Activated CD4-positive, alpha-beta T cell treated with anti-CD3 and anti-CD28 coated beads for 36 hours (primary cell): ENCODE measurements at regions of chr1 and their contacts with region 1.

Region 1: GRCh38 chr1:67162957-67163356 is 3.3 kb upstream of the IL23R start:
- DNase-seq: peak; percentile 71
- ATAC-seq: peak; percentile 73
- H3K4me3 Mint-ChIP-seq: peak overlapping the region; percentile 59
- H3K27ac Mint-ChIP-seq: peak overlapping the region; percentile 90
- H3K4me1 Mint-ChIP-seq: peaks cover 66% of the 10 kb centered on the region
- H3K27me3 Mint-ChIP-seq: peaks cover 1% of the 10 kb centered on the region

Region 2: DNA sequence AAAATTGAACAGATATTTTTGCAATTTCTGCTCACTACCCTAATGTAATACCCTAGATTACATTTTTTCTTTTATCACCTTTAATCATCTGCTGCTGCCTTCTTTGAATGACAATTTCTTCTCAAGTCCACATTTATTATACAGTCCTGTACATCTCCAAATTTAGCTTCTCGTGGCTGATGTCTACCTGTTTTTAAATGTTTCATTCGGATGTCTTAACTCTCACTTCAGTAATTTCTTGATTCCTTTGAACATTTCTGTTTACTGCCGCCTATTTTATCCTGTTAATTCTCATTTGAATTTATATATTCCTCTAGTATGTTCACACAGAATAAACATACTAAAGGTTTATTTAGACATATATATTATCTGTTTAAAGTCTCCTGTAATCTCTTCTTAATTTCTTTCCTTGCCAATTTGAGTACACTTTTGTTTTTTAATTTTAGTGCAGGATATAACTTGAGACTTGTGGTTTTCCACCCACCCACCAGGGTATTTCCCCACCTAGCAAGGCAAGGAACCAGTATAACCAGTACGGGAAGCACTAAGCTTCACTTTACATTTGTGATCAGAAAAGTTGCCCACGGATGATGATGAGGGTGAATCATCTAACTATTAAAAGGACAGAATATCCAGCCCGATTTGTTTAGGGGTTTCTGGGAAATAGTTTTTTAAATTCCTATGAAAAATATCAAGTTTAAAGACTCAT is 374.6 kb before region 1 on chr1:
- CTCF ChIA-PET with region 1: no interaction called
- POLR2A ChIA-PET with region 1: no interaction called
- intact Hi-C with region 1: loop called in 1 of 2 experiments (anchors 5 kb)
- DNase-seq: peak; percentile 81
- ATAC-seq: peak; percentile 99
- H3K4me3 Mint-ChIP-seq: peak overlapping the region; percentile 54
- H3K27ac Mint-ChIP-seq: peak overlapping the region; percentile 49
- H3K4me1 Mint-ChIP-seq: peaks cover 25% of the 10 kb centered on the region
- H3K27me3 Mint-ChIP-seq: no peaks in the 10 kb centered on the region

Region 3: DNA sequence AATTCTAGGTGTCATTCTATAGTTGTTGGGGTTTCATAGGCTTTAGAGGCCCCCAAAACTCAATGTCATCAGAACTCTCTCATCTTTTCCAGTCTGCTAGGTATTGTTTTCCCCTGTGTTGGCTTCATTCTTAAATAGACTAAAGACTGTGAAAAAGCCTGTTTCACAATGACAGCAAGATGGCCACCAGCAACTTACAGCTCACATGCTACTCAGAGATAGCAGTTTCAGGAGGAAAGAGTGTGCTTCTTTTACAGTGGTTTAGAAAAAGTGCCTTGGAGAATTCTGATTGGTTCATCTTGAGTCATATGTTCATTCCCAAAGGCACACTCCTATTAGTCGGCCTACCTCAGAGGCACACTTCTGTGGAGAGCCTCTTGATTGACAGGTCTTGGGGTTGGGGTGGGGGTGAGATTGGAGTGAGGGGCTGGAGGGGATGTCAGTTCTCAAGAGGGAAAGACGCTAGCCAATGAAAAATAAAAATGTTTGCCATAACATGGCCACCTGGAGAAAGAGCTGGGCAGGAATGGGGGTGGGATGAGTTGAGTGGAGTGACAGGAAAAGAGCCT is 11.8 kb after region 1 on chr1:
- CTCF ChIA-PET with region 1: interaction called, 17 read pairs
- POLR2A ChIA-PET with region 1: interaction called, 7 read pairs
- intact Hi-C with region 1: loop called (anchors 1 kb)
- DNase-seq: peak; percentile 61
- ATAC-seq: peak; percentile 70
- H3K4me3 Mint-ChIP-seq: peak overlapping the region; percentile 25
- H3K27ac Mint-ChIP-seq: peak overlapping the region; percentile 94
- H3K4me1 Mint-ChIP-seq: peaks cover 68% of the 10 kb centered on the region
- H3K27me3 Mint-ChIP-seq: no peaks in the 10 kb centered on the region

Region 4: DNA sequence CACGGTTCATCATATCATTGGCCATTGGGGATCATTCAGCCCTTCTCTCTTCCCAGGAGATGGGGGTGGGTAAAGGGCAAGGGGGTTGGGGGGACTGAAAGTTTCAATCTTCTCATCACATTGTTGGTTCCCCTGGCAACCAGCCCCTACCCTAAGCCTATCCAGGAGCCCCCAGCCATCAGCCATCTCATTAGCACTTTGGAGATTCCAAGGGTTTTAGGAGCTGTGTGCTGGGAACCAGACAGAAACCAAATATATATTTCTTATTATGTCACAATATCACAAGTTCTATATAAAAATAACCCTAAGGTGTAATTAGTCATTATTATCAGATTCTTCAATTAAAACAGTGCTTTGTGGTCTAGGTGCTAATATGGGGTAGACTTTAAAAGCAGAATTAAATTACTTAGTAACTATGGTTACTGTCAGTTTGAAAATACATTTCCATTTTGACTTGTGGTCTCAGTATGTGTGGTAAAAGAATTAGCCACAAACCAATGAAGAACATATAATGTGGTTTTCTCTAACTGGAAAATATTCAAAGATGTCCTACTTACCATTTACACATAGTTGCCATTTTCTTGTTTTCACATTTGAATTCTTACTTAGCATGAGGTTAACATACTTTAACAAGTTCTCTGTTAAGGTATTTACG is 31.4 kb after region 1 on chr1:
- CTCF ChIA-PET with region 1: interaction called, 3 read pairs
- POLR2A ChIA-PET with region 1: interaction called, 6 read pairs
- intact Hi-C with region 1: loop called (anchors 1 to 5 kb)
- DNase-seq: no peak
- ATAC-seq: peak; percentile 24
- H3K4me3 Mint-ChIP-seq: no peak overlapping the region
- H3K27ac Mint-ChIP-seq: peak overlapping the region; percentile 60
- H3K4me1 Mint-ChIP-seq: peaks cover 21% of the 10 kb centered on the region
- H3K27me3 Mint-ChIP-seq: no peaks in the 10 kb centered on the region

Region 5: GRCh38 chr1:68093737-68094136 is 930.8 kb after region 1 on chr1:
- CTCF ChIA-PET with region 1: no interaction called
- POLR2A ChIA-PET with region 1: no interaction called
- intact Hi-C with region 1: no loop called
- DNase-seq: no peak
- ATAC-seq: no peak
- H3K4me3 Mint-ChIP-seq: no peak overlapping the region
- H3K27ac Mint-ChIP-seq: no peak overlapping the region
- H3K4me1 Mint-ChIP-seq: no peaks in the 10 kb centered on the region
- H3K27me3 Mint-ChIP-seq: peaks cover 6% of the 10 kb centered on the region